IMR-90 (cell line): ENCODE measurements at regions of chr10 and their contacts with region 1.

Region 1: GRCh38 chr10:103888113-103888841 is 29.7 kb downstream of the STN1 start:
- DNase-seq: peak; percentile 91
- ATAC-seq: peak; percentile 90
- H3K4me3 ChIP-seq: no peak overlapping the region
- H3K27ac ChIP-seq: no peak overlapping the region; the same call in 1 of the 2 replicates
- H3K4me1 ChIP-seq: peaks cover 12% of the 10 kb centered on the region; the same call in 1 of the 2 replicates
- H3K27me3 ChIP-seq: no peaks in the 10 kb centered on the region
- CTCF ChIP-seq: peak; percentile 81
- POLR2A ChIP-seq: no peak
- RAD21 ChIP-seq: peak; percentile 81

Region 2: GRCh38 chr10:103947799-103948516 is 59.7 kb after region 1 on chr10:
- CTCF ChIA-PET with region 1: no interaction called
- POLR2A ChIA-PET with region 1: no interaction called
- dilution Hi-C with region 1: no loop called
- in situ Hi-C with region 1: no loop called
- intact Hi-C with region 1: no loop called
- DNase-seq: no peak
- ATAC-seq: no peak
- H3K4me3 ChIP-seq: no peak overlapping the region
- H3K27ac ChIP-seq: no peak overlapping the region
- H3K4me1 ChIP-seq: no peaks in the 10 kb centered on the region
- H3K27me3 ChIP-seq: peaks cover 21% of the 10 kb centered on the region
- CTCF ChIP-seq: no peak
- POLR2A ChIP-seq: no peak
- RAD21 ChIP-seq: no peak

Region 3: GRCh38 chr10:103966671-103967447 is 78.6 kb after region 1 on chr10 and contains the start of gene SLK:
- CTCF ChIA-PET with region 1: interaction called, 3 read pairs
- POLR2A ChIA-PET with region 1: no interaction called
- dilution Hi-C with region 1: no loop called
- in situ Hi-C with region 1: no loop called
- intact Hi-C with region 1: loop called (anchors 1 kb)
- DNase-seq: peak; percentile 79
- ATAC-seq: peak; percentile 90
- H3K4me3 ChIP-seq: peak within 1 kb of the TSS; percentile 93
- H3K27ac ChIP-seq: peak within 1 kb of the TSS; percentile 65
- H3K4me1 ChIP-seq: no peaks in the 10 kb centered on the region; the same call in 1 of the 2 replicates
- H3K27me3 ChIP-seq: no peaks in the 10 kb centered on the region
- CTCF ChIP-seq: no peak
- POLR2A ChIP-seq: peak; percentile 42; the same call in 1 of the 2 replicates
- RAD21 ChIP-seq: no peak
- total RNA-seq, gene SLK: 21.5 and 54.2 TPM in 2 replicates

Region 4: DNA sequence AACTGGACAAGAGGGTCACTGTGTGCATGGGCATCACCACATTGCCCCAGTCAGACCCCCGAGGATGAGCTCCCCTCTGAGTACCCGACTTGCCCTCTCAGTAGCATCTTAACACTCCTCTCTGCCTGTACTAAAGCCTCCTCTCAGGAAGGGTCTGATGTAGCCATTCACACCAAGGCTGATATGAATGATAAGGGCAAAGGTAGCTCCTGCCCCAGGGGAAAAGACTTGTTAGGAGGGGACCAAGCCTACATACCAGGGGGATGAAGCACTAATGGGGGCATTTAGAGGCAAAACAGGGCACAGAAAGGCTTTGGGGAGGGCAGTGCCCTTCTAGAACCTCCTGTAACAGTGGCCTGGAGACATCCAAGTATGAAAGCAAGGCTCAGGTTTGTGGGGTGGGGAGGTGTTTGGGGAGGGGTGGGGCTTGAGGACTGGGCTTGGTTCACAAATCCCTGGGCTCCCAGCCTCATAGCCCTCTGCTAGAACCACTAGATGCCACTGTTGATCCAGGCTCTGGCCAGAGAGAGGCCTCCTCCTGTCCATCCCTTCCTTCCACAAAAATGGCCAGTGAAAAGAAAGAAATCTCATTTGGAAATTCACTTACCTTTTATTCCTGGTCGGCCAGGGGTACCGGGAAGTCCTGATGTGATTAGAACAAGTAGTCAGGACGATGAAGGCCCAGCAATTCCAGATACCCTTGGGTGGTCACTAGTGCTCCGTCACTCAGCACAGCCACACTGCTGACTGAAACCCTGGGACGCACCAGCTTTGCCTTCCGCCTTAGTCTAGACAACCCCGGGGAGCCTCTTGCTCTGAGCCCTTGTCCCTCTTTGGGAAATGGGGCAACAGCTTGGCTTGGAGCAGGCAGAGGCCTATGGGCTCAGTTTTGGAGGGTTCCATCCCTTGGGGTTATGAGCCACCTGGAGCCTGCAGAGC is 157.1 kb after region 1 on chr10:
- CTCF ChIA-PET with region 1: no interaction called
- POLR2A ChIA-PET with region 1: no interaction called
- dilution Hi-C with region 1: no loop called
- in situ Hi-C with region 1: no loop called
- intact Hi-C with region 1: loop called (anchors 5 kb)
- DNase-seq: peak; percentile 76
- ATAC-seq: peak; percentile 96
- H3K4me3 ChIP-seq: no peak overlapping the region
- H3K27ac ChIP-seq: no peak overlapping the region
- H3K4me1 ChIP-seq: 0 out of 2 replicates have a peak, but pooled peaks cover 3% of the 10 kb centered on the region
- H3K27me3 ChIP-seq: no peaks in the 10 kb centered on the region
- CTCF ChIP-seq: peak; percentile 95
- POLR2A ChIP-seq: peak; percentile 49; the same call in 1 of the 2 replicates
- RAD21 ChIP-seq: peak; percentile 99

Region 5: DNA sequence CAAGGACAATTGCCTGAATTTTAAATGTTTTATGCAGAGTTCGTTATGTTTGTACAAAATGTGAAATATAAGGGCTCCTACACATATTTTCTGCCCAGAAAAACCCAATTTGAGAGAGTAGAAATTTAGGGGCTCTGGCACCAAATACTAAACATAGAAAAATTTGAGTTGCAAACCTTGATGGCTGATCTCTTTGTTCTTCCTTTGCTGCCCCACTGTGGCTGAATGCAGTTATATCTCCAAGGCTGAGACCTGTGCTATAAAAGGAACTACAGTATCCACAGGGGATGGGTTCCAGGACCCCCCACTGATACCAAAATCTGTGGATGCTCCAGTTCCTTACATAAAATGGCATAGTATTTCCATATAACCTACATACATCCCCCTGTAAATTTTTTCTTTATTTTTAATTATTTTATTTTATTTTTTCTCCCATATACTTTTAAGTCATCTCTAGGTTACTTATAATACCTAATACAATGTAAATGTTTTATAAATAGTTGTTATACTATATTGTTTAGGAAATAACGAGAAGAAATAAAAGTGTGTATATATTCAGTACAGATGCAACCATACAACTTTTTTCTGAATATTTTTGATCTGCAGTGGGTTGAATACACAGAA is 321.4 kb after region 1 on chr10:
- CTCF ChIA-PET with region 1: no interaction called
- POLR2A ChIA-PET with region 1: no interaction called
- dilution Hi-C with region 1: no loop called
- in situ Hi-C with region 1: loop called (anchors 5 kb)
- intact Hi-C with region 1: loop called (anchors 1 kb)
- DNase-seq: peak; percentile 39
- ATAC-seq: peak; percentile 79
- H3K4me3 ChIP-seq: no peak overlapping the region
- H3K27ac ChIP-seq: no peak overlapping the region
- H3K4me1 ChIP-seq: no peaks in the 10 kb centered on the region
- H3K27me3 ChIP-seq: peaks cover 29% of the 10 kb centered on the region
- CTCF ChIP-seq: peak; percentile 64
- POLR2A ChIP-seq: no peak
- RAD21 ChIP-seq: peak; percentile 68

Region 6: DNA sequence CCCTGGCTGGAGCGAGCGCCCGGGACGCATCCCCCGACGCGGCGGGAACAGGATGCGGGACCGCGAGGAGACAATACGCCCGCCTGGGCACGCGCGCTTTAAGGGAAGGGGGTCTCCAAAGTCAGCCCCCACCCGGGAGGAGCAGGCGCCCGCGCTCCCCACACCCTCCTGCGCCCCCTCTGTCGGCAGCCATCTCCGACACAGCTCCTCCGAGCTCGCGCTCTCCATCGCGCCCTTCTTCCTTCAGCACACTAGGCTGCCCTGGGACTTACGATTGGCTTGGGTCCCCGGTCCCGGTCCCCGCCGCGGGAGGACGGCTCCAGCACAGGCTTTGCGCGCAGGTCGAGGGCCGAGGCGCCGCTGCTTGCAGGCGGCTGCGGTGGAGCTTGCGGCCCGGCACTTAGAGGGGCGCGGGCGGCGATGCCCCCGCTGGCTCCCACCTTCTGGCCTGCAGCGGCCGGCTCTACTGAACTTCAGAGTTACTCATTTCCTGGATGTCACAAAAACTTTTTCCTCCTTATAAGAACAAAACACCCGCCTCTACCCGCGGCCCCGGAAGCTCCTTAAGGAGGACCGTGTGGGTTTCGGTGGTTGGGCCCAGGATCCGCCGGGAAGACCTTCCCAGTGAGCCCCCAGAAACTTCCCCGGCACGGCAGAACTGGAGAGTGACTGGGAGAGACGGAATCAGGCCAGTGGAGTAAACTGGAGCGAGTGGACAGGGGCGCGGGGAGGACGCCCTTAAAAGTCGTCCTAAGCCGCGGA is 449.9 kb after region 1 on chr10 and contains the start of gene ITPRIP:
- CTCF ChIA-PET with region 1: no interaction called
- POLR2A ChIA-PET with region 1: no interaction called
- dilution Hi-C with region 1: no loop called
- in situ Hi-C with region 1: no loop called
- intact Hi-C with region 1: loop called (anchors 5 kb)
- DNase-seq: peak; percentile 87
- ATAC-seq: peak; percentile 79
- H3K4me3 ChIP-seq: peak within 1 kb of the TSS; percentile 83
- H3K27ac ChIP-seq: peak within 1 kb of the TSS; percentile 98
- H3K4me1 ChIP-seq: peaks cover 31% of the 10 kb centered on the region
- H3K27me3 ChIP-seq: no peaks in the 10 kb centered on the region
- CTCF ChIP-seq: no peak; the same call in 1 of the 2 replicates
- POLR2A ChIP-seq: peak; percentile 97
- RAD21 ChIP-seq: no peak
- total RNA-seq, gene ITPRIP: 7.2 and 7.5 TPM in 2 replicates